H1 (cell line): ENCODE measurements at regions of chr7 and their contacts with region 1.

Region 1: DNA sequence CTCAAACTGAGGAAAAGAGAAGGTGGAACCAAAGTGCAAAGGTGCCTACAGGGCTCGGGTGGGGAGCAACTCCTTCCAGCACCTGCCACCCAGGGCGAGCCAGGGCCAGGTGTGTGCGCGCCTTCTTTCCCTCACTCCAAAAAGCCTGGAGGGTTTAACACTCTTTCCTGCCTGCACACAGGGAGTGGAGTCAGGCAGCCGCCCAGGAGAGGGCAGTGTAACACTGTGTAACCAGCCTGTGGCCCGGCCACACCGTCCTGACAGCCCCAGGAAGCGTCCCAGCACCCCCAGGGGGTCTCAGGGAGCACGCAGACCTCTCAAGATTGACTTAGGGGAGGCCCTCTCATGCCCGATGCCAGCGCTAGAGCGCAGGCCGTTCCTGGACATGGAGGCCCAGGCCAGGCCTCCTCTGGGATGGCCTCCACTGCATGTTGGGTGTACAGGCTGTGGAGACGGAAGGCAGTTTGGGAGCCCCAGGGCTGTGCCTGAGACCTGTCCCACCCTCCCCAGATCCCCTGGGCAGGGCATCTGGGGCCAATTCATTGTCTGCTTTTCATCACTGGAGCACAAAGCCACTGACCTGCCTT is 13.4 kb downstream of the BRI3 start:
- DNase-seq: peak; percentile 70 to 91
- H3K4me3 ChIP-seq: no peak overlapping the region
- H3K27ac ChIP-seq: no peak overlapping the region
- H3K4me1 ChIP-seq: peaks cover 0 to 10% (median 3%) of the 10 kb centered on the region in 4 experiments; a peak in 5 of 7 replicates
- H3K27me3 ChIP-seq: no peaks in the 10 kb centered on the region
- CTCF ChIP-seq: peak; percentile 85 to 91 (median 91)
- EP300 ChIP-seq: no peak
- POLR2A ChIP-seq: 0 out of 3 replicates have a peak, but pooled peaks of 1 of the 2 experiments have one; percentile 34
- RAD21 ChIP-seq: peak; percentile 92 to 95

Region 2: GRCh38 chr7:98133181-98133580 is 161.7 kb before region 1 on chr7:
- CTCF ChIA-PET with region 1: no interaction called
- POLR2A ChIA-PET with region 1: no interaction called
- DNase-seq: no peak
- H3K4me3 ChIP-seq: no peak overlapping the region
- H3K27ac ChIP-seq: no peak overlapping the region
- H3K4me1 ChIP-seq: peaks cover 2 to 14% (median 8%) of the 10 kb centered on the region in 4 experiments
- H3K27me3 ChIP-seq: no peaks in the 10 kb centered on the region
- CTCF ChIP-seq: no peak
- EP300 ChIP-seq: no peak
- POLR2A ChIP-seq: no peak
- RAD21 ChIP-seq: no peak

Region 3: GRCh38 chr7:98157761-98158160 is 137.1 kb before region 1 on chr7:
- CTCF ChIA-PET with region 1: no interaction called
- POLR2A ChIA-PET with region 1: no interaction called
- DNase-seq: no peak
- H3K4me3 ChIP-seq: no peak overlapping the region
- H3K27ac ChIP-seq: no peak overlapping the region
- H3K4me1 ChIP-seq: no peaks in the 10 kb centered on the region
- H3K27me3 ChIP-seq: no peaks in the 10 kb centered on the region
- CTCF ChIP-seq: no peak
- EP300 ChIP-seq: no peak
- POLR2A ChIP-seq: no peak
- RAD21 ChIP-seq: no peak

Region 4: GRCh38 chr7:98284335-98285036 is 10.4 kb before region 1 on chr7:
- CTCF ChIA-PET with region 1: interaction called, 14 read pairs
- POLR2A ChIA-PET with region 1: interaction called, 7 read pairs
- DNase-seq: no peak
- H3K4me3 ChIP-seq: no peak overlapping the region
- H3K27ac ChIP-seq: no peak overlapping the region
- H3K4me1 ChIP-seq: peaks cover 7 to 26% (median 18%) of the 10 kb centered on the region in 4 experiments
- H3K27me3 ChIP-seq: no peaks in the 10 kb centered on the region
- CTCF ChIP-seq: no peak
- EP300 ChIP-seq: no peak
- POLR2A ChIP-seq: no peak; a peak in 1 of 3 replicates
- RAD21 ChIP-seq: no peak

Region 5: GRCh38 chr7:98305951-98306535 is 11.2 kb after region 1 on chr7:
- CTCF ChIA-PET with region 1: interaction called, 15 read pairs
- POLR2A ChIA-PET with region 1: interaction called, 5 read pairs
- DNase-seq: no peak
- H3K4me3 ChIP-seq: no peak overlapping the region
- H3K27ac ChIP-seq: no peak overlapping the region
- H3K4me1 ChIP-seq: peaks cover 2 to 5% (median 5%) of the 10 kb centered on the region in 4 experiments; a peak in 4 of 7 replicates
- H3K27me3 ChIP-seq: no peaks in the 10 kb centered on the region
- CTCF ChIP-seq: no peak
- EP300 ChIP-seq: no peak
- POLR2A ChIP-seq: no peak
- RAD21 ChIP-seq: no peak